ENCODE measurements at regions of chr10 and their contacts with region 1.

Region 1: GRCh38 chr10:16612115-16612980 is 90.7 kb upstream of the C1QL3 start:
- DNase-seq: peak in 1 of 2 experiments; percentile 7
- H3K4me3 ChIP-seq: no peak overlapping the region
- H3K27ac ChIP-seq: no peak overlapping the region
- H3K4me1 ChIP-seq: no peaks in the 10 kb centered on the region
- H3K27me3 ChIP-seq: no peaks in the 10 kb centered on the region
- CTCF ChIP-seq: no peak

Region 2: GRCh38 chr10:16673443-16673842 is 61.1 kb after region 1 on chr10:
- CTCF ChIA-PET with region 1: no interaction called
- POLR2A ChIA-PET with region 1: no interaction called
- intact Hi-C with region 1: loop called (anchors 2 kb)
- DNase-seq: no peak
- H3K4me3 ChIP-seq: no peak overlapping the region
- H3K27ac ChIP-seq: no peak overlapping the region
- H3K4me1 ChIP-seq: no peaks in the 10 kb centered on the region
- H3K27me3 ChIP-seq: no peaks in the 10 kb centered on the region
- CTCF ChIP-seq: no peak

Region 3: GRCh38 chr10:16832351-16833080 is 220.2 kb after region 1 on chr10:
- CTCF ChIA-PET with region 1: no interaction called
- POLR2A ChIA-PET with region 1: no interaction called
- intact Hi-C with region 1: no loop called
- DNase-seq: peak; percentile 59 to 64
- H3K4me3 ChIP-seq: no peak overlapping the region
- H3K27ac ChIP-seq: no peak overlapping the region
- H3K4me1 ChIP-seq: no peaks in the 10 kb centered on the region
- H3K27me3 ChIP-seq: no peaks in the 10 kb centered on the region
- CTCF ChIP-seq: no peak

Measured in PC-9 (cell line).